Calu3 (cell line): ENCODE measurements at regions of chr7 and their contacts with region 1.

Region 1: DNA sequence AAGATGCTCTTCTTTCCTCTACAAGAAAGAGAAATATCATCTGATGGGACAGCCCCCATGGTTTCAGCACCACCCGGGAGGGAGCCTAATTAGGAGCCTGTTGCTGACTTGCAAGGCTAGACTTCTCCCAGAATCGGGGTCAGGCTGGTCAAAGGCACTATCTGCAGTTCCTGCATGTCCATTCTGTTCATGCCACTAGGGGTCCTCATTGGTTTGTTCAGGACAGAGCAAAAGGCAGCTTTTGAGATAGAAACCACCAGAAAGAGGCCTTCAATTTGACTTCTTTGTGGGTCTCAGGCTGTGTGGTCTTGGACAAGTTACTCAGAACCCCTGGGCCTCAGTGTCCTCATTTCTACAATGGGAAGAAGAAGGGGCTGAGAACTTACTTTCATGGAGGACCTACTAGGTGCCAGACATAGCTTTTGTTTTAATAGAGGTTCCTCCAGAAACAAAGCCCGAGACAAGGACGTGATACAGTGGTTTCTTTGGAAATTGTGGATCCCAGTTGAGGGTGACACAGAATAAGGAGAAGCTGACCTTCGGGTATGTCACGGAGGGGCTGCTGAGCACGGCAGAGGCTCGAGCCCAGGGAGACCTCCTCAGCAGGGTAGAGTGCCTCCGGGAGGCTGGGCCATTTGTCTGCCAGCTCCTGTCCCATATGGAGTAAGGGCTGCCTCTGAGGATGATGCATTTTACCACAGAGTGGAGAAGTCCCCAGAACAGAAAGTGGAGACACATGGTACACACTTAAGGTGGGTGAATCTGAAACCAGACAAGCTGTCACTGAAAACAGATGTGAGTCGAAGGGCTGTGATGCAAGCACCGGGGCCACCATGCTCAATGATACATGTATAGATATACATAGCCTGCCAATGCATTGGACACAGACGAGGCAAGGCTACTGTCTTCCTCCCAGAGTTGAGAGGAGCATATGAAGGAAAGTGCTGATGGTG is 33.1 kb upstream of the NEUROD6 start:
- DNase-seq: peak; percentile 84
- H3K4me3 Mint-ChIP-seq: no peak overlapping the region
- H3K27ac Mint-ChIP-seq: no peak overlapping the region
- H3K4me1 Mint-ChIP-seq: peaks cover 10% of the 10 kb centered on the region
- H3K27me3 Mint-ChIP-seq: no peaks in the 10 kb centered on the region
- CTCF ChIP-seq: peak; percentile 83

Region 2: GRCh38 chr7:31134246-31135188 is 239.1 kb before region 1 on chr7:
- CTCF ChIA-PET with region 1: interaction called, 14 read pairs
- intact Hi-C with region 1: no loop called
- DNase-seq: peak; percentile 87
- H3K4me3 Mint-ChIP-seq: no peak overlapping the region
- H3K27ac Mint-ChIP-seq: no peak overlapping the region
- H3K4me1 Mint-ChIP-seq: no peaks in the 10 kb centered on the region
- H3K27me3 Mint-ChIP-seq: peaks cover 50% of the 10 kb centered on the region
- CTCF ChIP-seq: peak; percentile 92

Region 3: DNA sequence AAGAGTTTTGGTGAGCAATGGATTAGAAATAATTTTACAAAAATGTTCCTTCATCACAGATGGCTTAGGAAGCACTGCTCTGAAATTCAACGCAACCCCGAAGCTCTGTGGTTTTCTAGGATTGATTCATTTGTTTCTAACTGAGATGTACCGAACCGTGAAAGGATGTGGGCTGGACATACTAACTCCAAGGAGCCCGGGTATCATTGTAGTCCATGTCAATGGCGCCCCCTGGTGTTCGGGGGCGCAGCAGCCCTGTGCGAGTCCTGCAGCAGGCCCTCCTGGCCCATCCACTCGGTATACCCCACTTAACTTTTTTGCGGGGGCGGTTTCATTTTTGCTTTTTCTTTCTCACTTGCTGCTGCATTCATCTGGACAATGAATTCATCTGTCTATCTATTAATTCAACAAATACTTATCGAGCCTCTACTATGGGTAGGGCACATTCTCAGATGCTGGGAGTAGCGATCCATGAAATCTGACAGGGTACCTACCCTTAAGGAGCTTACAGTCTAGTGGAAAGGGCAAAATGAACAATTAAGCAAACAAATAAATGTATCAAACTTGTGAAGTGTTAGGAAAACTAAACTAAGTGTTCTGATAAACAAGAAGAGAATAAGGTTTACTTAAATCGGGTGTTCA is 115.1 kb after region 1 on chr7:
- CTCF ChIA-PET with region 1: interaction called, 4 read pairs
- intact Hi-C with region 1: loop called (anchors 1 kb)
- DNase-seq: peak; percentile 79
- H3K4me3 Mint-ChIP-seq: no peak overlapping the region
- H3K27ac Mint-ChIP-seq: no peak overlapping the region
- H3K4me1 Mint-ChIP-seq: peaks cover 51% of the 10 kb centered on the region
- H3K27me3 Mint-ChIP-seq: no peaks in the 10 kb centered on the region
- CTCF ChIP-seq: peak; percentile 91

Region 4: DNA sequence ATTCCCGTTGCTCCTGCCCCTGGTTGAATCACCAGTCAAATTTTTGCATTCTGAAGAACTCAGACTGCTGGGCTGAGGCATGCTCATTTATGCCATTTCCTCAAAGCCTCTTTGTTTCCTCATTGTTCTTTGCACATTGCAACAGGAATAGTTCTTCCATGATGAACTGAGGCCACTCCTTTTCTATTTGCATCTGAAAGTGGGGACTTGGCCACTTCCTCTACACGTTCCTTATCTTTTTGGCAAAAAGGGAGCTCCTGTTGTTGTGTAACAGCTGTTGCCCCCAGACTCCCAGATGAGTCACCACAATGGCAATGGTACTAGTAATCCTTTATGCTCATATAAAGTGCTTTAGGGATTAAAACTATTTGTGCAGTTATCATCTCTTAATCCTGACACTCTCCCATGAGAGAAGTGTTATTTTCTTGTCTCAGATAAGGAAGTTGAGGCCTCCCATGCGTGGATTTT is 120.1 kb after region 1 on chr7:
- CTCF ChIA-PET with region 1: interaction called, 4 read pairs
- intact Hi-C with region 1: loop called (anchors 1 kb)
- DNase-seq: peak; percentile 87
- H3K4me3 Mint-ChIP-seq: peak overlapping the region; percentile 16
- H3K27ac Mint-ChIP-seq: peak overlapping the region; percentile 95
- H3K4me1 Mint-ChIP-seq: peaks cover 78% of the 10 kb centered on the region
- H3K27me3 Mint-ChIP-seq: no peaks in the 10 kb centered on the region
- CTCF ChIP-seq: no peak

Region 5: GRCh38 chr7:31553661-31554081 is 180.1 kb after region 1 on chr7:
- CTCF ChIA-PET with region 1: no interaction called
- intact Hi-C with region 1: loop called (anchors 5 kb)
- DNase-seq: no peak
- H3K4me3 Mint-ChIP-seq: no peak overlapping the region
- H3K27ac Mint-ChIP-seq: peak overlapping the region; percentile 71
- H3K4me1 Mint-ChIP-seq: peaks cover 22% of the 10 kb centered on the region
- H3K27me3 Mint-ChIP-seq: no peaks in the 10 kb centered on the region
- CTCF ChIP-seq: no peak

Region 6: DNA sequence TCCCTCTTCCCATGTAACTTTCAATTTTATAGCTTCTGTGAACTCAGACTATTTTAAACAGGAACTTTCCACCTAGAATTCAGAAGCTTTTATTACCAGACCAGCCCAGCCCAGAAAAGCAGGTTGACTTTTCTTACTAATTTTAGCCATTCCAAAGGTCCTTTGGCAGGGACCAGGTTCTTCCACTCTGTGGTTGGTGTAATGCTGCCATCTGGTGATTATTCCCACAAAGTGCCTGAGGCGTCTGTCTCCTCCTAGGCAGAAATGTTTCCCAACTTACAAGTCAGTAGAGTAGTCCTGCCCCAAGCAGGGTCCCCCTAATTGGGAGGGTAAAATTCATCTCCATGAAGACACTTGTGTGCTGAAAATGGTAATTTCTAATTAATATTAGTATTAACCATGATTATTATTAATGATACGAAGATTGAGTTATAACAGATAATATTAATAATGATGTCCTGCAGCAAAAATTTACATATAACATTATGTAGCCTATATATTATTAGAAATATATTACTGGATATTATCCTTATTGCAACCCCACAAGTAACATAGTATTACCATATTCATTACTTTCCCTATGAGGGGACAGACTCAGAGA is 260.4 kb after region 1 on chr7:
- CTCF ChIA-PET with region 1: interaction called, 62 read pairs
- intact Hi-C with region 1: loop called (anchors 1 kb)
- DNase-seq: peak; percentile 83
- H3K4me3 Mint-ChIP-seq: no peak overlapping the region
- H3K27ac Mint-ChIP-seq: peak overlapping the region; percentile 44
- H3K4me1 Mint-ChIP-seq: peaks cover 28% of the 10 kb centered on the region
- H3K27me3 Mint-ChIP-seq: no peaks in the 10 kb centered on the region
- CTCF ChIP-seq: peak; percentile 92

Region 7: DNA sequence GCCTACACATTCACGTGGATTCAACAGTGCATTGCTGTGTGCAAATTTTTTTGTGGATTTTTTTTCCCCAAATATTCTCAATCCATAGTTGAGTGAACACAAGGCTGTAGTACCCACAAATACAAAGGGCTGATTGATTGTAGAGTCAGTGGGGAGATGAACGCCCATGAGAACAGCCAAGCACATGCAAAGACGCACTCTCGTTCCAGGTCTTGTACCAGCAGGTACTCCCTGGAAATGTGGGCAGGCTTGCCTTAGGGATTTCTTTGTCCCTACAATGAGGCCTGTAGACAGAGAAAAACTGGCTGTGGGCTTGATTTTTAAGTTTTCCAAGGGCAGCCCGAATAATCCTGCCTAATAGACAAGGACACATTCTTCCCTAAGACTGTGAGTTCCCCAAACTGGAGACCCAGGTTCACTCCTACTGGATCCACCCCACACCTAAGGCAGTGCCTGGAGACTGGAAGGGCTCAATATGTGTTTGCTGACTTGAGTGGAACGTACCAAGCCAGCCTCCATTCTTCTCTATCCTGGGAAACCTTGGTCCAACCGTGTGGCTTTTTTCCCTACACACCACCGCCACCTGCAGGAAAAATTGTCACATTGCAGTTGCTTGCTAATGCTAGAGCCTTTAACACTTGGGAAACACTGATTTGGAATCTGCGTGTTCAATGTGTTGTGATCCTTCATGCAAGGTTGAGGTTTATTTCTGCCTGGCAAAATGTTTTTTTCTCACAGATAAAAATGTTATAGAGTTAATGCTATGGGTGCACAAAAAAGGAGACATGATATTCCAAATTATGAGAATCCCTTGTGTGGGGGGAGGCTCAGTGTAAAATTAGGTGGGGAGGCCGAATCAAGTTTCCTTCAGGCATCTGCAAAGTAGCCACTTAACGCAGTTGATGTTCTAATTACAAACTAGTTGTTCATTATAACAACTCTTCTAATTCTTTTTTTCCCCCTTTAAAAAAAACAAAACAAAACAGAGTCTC is 362.7 kb after region 1 on chr7:
- CTCF ChIA-PET with region 1: no interaction called
- intact Hi-C with region 1: loop called (anchors 1 kb)
- DNase-seq: peak; percentile 86
- H3K4me3 Mint-ChIP-seq: no peak overlapping the region
- H3K27ac Mint-ChIP-seq: no peak overlapping the region
- H3K4me1 Mint-ChIP-seq: no peaks in the 10 kb centered on the region
- H3K27me3 Mint-ChIP-seq: no peaks in the 10 kb centered on the region
- CTCF ChIP-seq: peak; percentile 94